Activated CD4-positive, alpha-beta memory T cell treated with anti-CD3 and anti-CD28 coated beads, Interleukin-2, amount 10 ng/mL, durations not matched to agents 7 days and 5 days (primary cell): ENCODE measurements at regions of chr16 and their contacts with region 1.

Region 1: DNA sequence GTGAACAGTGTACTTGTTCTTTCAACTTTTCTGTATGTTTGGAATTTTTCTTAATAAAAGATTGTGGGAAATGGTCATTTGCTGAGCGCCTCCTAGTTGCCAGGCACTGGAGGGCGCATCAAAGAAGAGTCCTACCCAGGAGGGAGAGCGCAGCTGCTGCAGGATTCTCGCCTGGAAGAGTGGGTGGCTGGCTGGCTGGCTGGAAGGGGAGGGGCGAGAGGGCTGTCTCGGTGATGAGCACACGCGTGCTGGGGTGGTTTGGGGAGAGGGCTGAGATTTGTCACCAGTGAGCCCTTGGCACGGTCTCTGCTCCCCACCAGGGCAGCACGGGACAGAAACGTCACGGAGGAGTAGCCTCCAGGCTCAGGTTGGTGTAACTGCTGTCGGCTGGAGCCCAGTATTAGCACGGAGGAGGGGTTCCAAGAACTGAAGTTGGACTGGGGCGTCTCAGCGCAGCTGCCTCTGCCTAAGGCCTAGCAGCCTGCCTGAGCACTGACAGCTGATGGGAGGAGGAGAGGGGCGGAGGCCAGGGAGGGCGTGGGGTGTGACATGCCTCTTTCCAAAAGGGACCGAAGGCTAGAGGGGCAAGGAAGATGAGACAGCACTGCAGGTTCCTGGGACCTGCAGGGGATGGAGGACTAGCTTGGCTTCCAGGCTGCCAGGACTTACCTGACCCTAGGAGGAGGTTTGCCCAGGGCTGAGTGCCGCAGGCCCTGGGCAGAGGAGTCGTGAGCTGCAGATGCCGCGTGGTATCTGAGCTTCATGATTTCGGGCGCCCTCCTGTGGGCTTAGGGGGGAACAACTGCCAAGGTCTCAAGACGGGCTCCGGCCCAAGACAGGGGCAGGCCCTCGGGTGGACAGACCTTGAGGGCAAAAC is 5.7 kb downstream of the LDHD start:
- DNase-seq: peak; percentile 88
- H3K4me3 Mint-ChIP-seq: peak overlapping the region; percentile 57
- H3K27ac Mint-ChIP-seq: peak overlapping the region; percentile 88
- H3K4me1 Mint-ChIP-seq: peaks cover 61% of the 10 kb centered on the region
- H3K27me3 Mint-ChIP-seq: no peaks in the 10 kb centered on the region

Region 2: GRCh38 chr16:74709441-74709877 is 401.4 kb before region 1 on chr16:
- CTCF ChIA-PET with region 1: interaction called, 13 read pairs
- POLR2A ChIA-PET with region 1: no interaction called
- DNase-seq: peak; percentile 85
- H3K4me3 Mint-ChIP-seq: no peak overlapping the region
- H3K27ac Mint-ChIP-seq: no peak overlapping the region
- H3K4me1 Mint-ChIP-seq: peaks cover 11% of the 10 kb centered on the region
- H3K27me3 Mint-ChIP-seq: peaks cover 5% of the 10 kb centered on the region

Region 3: GRCh38 chr16:74862741-74863244 is 248.1 kb before region 1 on chr16:
- CTCF ChIA-PET with region 1: interaction called, 20 read pairs
- POLR2A ChIA-PET with region 1: interaction called, 3 read pairs
- DNase-seq: no peak
- H3K4me3 Mint-ChIP-seq: no peak overlapping the region
- H3K27ac Mint-ChIP-seq: no peak overlapping the region
- H3K4me1 Mint-ChIP-seq: peaks cover 6% of the 10 kb centered on the region
- H3K27me3 Mint-ChIP-seq: no peaks in the 10 kb centered on the region

Region 4: GRCh38 chr16:74998481-74999218 is 112.2 kb before region 1 on chr16 and contains the start of gene ZNRF1:
- CTCF ChIA-PET with region 1: interaction called, 186 read pairs
- POLR2A ChIA-PET with region 1: interaction called, 60 read pairs
- DNase-seq: peak; percentile 83
- H3K4me3 Mint-ChIP-seq: peak within 1 kb of the TSS; percentile 77
- H3K27ac Mint-ChIP-seq: peak within 1 kb of the TSS; percentile 73
- H3K4me1 Mint-ChIP-seq: peaks cover 35% of the 10 kb centered on the region
- H3K27me3 Mint-ChIP-seq: peaks cover 22% of the 10 kb centered on the region
- total RNA-seq, gene ZNRF1: 22.7 to 25.3 TPM

Region 5: DNA sequence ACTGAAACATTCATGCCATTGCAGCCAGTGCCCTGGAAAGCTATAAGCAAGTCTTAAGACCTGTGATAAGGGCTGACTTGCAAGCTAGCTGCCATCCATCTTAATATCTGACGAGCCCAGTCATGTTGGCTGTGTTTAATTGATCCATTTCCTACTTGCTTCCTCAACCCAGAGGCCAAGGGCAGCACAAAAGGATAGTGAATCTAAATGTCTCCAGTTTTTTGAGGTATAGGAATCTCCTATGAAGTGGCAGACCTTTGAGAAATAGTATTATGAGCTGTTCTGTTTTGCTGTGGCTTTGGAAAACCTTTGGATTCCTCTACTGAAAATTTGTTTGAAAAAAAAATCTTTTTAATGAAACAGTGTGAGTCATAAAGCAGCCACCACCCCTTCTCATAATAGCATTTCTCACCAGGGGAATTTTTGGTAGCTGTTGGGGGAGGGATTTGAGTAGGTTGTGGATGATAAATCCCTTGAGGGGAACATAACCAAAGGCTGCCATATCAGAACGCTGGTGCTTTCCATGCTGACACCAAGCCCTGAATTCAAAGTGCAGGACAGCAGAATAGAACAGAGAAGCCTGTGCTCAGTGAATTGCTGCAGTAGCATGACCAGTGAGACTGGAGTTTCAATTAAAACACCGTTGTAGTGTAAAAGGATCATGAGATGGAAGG is 99.1 kb before region 1 on chr16:
- CTCF ChIA-PET with region 1: interaction called, 62 read pairs
- POLR2A ChIA-PET with region 1: interaction called, 23 read pairs
- DNase-seq: peak; percentile 40
- H3K4me3 Mint-ChIP-seq: peak overlapping the region; percentile 64
- H3K27ac Mint-ChIP-seq: peak overlapping the region; percentile 77
- H3K4me1 Mint-ChIP-seq: peaks cover 38% of the 10 kb centered on the region
- H3K27me3 Mint-ChIP-seq: no peaks in the 10 kb centered on the region

Region 6: GRCh38 chr16:75064403-75065148 is 46.3 kb before region 1 on chr16:
- CTCF ChIA-PET with region 1: interaction called, 25 read pairs
- POLR2A ChIA-PET with region 1: interaction called, 4 read pairs
- DNase-seq: peak; percentile 30
- H3K4me3 Mint-ChIP-seq: peak overlapping the region; percentile 56
- H3K27ac Mint-ChIP-seq: peak overlapping the region; percentile 71
- H3K4me1 Mint-ChIP-seq: peaks cover 26% of the 10 kb centered on the region
- H3K27me3 Mint-ChIP-seq: no peaks in the 10 kb centered on the region

Region 7: DNA sequence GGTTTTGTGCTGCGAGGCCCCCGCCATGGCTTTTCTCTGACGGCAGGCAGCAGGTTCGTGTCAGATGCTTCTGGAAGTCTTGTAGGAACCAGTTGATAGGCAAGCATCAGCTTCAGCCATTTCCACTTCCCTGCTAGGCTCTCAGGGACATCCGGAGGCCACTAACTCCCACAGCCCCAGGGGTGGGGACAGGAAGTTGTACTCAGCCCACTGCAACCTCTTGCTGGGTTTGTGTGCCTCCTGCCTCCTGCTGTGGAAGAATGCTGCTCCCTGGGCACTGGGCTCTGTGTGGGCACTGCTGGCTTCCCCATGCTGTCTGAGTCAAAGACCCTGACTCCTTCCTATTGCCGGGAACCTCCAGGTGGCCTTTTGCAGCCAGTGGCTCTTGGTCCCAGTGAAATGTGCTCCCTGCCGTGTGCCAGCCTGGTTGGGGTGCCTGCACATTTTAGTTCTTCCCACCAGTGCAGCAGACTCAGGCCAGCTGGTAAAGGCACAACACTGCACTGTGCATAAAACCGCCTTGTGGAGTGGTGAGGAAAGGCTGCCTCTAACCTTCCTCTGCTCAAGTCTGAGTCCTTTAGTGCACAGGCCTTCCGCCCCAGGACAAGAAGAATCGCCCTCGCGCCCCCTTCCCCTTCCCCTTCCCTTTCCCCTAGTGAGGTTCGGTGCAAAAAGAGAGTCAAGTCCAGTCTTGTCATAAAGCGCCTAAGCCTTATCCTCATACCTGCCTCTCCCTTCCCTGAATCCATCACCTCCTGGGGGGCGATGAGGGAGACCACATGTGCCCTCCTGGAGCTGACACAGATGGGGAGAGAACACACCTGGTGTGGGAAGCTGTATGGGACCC is 10.9 kb before region 1 on chr16:
- CTCF ChIA-PET with region 1: interaction called, 59 read pairs
- POLR2A ChIA-PET with region 1: interaction called, 71 read pairs
- DNase-seq: peak; percentile 66
- H3K4me3 Mint-ChIP-seq: peak overlapping the region; percentile 30
- H3K27ac Mint-ChIP-seq: peak overlapping the region; percentile 84
- H3K4me1 Mint-ChIP-seq: peaks cover 61% of the 10 kb centered on the region
- H3K27me3 Mint-ChIP-seq: no peaks in the 10 kb centered on the region

Region 8: GRCh38 chr16:75160386-75160785 is 49.5 kb after region 1 on chr16:
- CTCF ChIA-PET with region 1: no interaction called
- POLR2A ChIA-PET with region 1: no interaction called
- DNase-seq: no peak
- H3K4me3 Mint-ChIP-seq: no peak overlapping the region
- H3K27ac Mint-ChIP-seq: no peak overlapping the region
- H3K4me1 Mint-ChIP-seq: no peaks in the 10 kb centered on the region
- H3K27me3 Mint-ChIP-seq: no peaks in the 10 kb centered on the region

Region 9: GRCh38 chr16:75319513-75320411 is 208.9 kb after region 1 on chr16:
- CTCF ChIA-PET with region 1: no interaction called
- POLR2A ChIA-PET with region 1: no interaction called
- DNase-seq: no peak
- H3K4me3 Mint-ChIP-seq: no peak overlapping the region
- H3K27ac Mint-ChIP-seq: no peak overlapping the region
- H3K4me1 Mint-ChIP-seq: peaks cover 16% of the 10 kb centered on the region
- H3K27me3 Mint-ChIP-seq: peaks cover 43% of the 10 kb centered on the region